ENCODE measurements at regions of chr17 and their contacts with region 1.

Region 1: DNA sequence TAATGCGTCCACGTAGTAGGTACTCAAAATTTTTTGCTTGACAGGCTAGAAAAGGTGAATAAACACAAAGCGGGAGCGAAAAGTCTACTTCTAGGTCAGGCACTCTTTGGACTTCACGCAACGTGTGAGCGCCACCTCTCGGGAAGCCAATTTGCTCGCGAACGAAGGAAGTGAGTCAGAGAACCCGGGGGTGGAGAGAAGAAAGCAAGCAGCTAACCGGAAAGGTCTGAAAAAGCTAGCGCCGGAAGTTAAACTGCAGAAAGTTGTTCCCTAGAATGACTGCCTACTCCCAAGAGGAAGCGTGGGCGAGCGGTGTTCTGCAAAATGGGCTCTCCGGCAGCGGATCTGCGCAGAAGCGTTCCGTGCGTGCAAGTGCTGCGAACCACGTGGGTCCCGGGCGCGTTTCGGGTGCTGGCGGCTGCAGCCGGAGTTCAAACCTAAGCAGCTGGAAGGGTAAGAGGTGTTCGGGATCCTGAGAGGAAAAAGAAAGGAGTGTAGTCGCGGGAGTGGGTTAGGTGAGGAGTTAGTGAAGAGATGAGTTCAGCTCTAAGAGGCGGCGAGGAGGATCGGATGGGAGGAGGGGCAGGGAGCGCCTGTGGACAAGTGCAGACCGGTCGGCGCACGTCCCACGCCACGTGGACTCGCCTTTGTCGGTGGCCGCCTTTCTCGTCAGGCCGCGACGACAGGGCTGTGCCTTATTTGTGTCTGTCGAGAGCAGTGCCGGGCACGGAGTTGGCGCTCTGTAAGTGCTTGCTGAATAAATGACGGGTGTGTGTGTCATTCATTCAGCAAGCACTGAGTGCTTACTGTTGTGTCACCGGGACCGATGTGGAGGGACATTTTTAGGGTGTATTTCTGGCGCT is at the start of gene NME1:
- DNase-seq: peak; percentile 94 to 99 (median 98)
- ATAC-seq: peak; percentile 97
- H3K4me3 ChIP-seq: peak within 1 kb of the TSS; percentile 78
- H3K4me3 Mint-ChIP-seq: no peak within 1 kb of the TSS
- H3K27ac ChIP-seq: peak within 1 kb of the TSS; percentile 75
- H3K27ac Mint-ChIP-seq: no peak within 1 kb of the TSS
- H3K4me1 ChIP-seq: peaks cover 15% of the 10 kb centered on the region in 2 donors
- H3K4me1 Mint-ChIP-seq: peaks cover 0 to 15% (median 6%) of the 10 kb centered on the region in 7 donors
- H3K27me3 ChIP-seq: no peaks in the 10 kb centered on the region
- H3K27me3 Mint-ChIP-seq: no peaks in the 10 kb centered on the region
- total RNA-seq, gene NME1: 13.4 to 159 (median 20.1) TPM

Region 2: DNA sequence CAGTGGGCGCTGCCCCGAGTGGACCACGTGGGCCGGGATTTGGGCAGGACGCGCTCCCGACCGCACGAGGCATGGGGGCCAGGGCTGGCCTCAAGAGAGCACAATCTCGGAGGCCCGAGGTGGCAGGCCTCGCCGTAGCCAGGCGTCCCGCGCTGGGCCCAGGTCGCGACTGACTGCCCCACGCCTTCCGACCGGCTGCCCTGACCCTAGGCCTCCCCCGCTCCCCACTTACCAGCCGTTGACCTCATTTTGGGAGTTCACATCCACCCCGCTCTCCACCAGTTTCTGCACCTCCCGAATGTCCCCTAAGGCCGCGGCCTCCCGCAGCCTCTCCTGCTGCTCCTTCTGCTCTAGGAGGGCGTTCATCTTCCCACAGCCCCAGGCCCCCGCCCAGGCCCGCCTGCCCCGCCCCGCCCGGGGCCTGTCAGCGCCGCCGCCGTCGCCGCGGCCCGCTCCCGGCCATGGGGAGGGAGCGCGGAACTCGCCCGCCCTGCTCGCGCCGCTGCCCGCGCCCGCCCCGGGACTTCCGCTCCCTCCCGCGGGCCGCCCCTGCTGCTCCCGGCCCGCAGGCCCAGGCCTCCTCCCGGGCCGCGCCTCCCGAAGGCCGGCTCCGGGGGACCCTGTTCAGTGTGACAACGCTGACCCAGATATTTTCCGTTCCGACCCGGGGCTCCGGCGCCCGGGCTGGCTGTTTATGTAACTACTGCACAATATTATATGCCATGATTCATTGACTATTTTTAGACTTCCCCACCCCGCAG is 446.0 kb before region 1 on chr17 and contains the start of gene ANKRD40:
- CTCF ChIA-PET with region 1: no interaction called
- POLR2A ChIA-PET with region 1: no interaction called
- intact Hi-C with region 1: loop called (anchors 2 to 10 kb)
- DNase-seq: peak; percentile 87 to 95 (median 91)
- ATAC-seq: peak; percentile 94
- H3K4me3 ChIP-seq: peak within 1 kb of the TSS; percentile 79
- H3K4me3 Mint-ChIP-seq: peak within 1 kb of the TSS; percentile 88 to 97 (median 93)
- H3K27ac ChIP-seq: peak within 1 kb of the TSS; percentile 88
- H3K27ac Mint-ChIP-seq: peak within 1 kb of the TSS; percentile 93 to 99 (median 97)
- H3K4me1 ChIP-seq: peaks cover 13 to 20% of the 10 kb centered on the region in 2 donors
- H3K4me1 Mint-ChIP-seq: peaks cover 23 to 68% (median 47%) of the 10 kb centered on the region in 7 donors
- H3K27me3 ChIP-seq: no peaks in the 10 kb centered on the region
- H3K27me3 Mint-ChIP-seq: peaks cover 0 to 2% (median 0%) of the 10 kb centered on the region in 5 donors
- total RNA-seq, gene ANKRD40: 27.4 to 37.2 (median 33.4) TPM

Region 3: DNA sequence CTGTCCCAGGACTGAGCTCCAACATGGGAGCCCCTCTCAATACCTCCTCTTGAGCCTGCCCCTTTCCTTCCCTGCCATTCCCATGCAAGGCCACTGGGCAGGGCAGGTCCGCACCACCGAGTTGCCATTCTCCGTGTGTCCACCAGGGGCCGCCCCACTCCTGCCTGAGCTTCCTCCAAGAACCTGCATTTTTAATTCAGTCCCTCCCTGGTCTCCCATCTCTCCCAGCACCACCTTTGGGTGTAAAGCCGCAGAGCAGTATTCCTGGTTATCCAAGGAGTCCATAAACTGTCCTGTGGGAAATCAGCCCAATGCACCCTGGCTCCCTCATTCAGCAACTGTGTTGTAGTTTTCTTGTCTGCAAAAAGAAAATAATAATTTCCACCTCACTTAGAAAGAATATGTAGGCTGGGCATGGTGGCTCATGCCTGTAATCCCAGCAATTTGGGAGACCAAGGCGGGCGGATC is 370.2 kb before region 1 on chr17:
- CTCF ChIA-PET with region 1: no interaction called
- POLR2A ChIA-PET with region 1: no interaction called
- intact Hi-C with region 1: loop called in 1 of 2 experiments (anchors 1 kb)
- DNase-seq: peak; percentile 53 to 82 (median 68)
- ATAC-seq: peak; percentile 86
- H3K4me3 ChIP-seq: no peak overlapping the region
- H3K4me3 Mint-ChIP-seq: peak overlapping the region in 7 of 10 donors; percentile 6 to 78 (median 46)
- H3K27ac ChIP-seq: no peak overlapping the region
- H3K27ac Mint-ChIP-seq: peak overlapping the region in 4 of 9 donors; percentile 21 to 58 (median 43)
- H3K4me1 ChIP-seq: peaks cover 0 to 14% of the 10 kb centered on the region in 2 donors
- H3K4me1 Mint-ChIP-seq: peaks cover 18 to 37% (median 27%) of the 10 kb centered on the region in 7 donors
- H3K27me3 ChIP-seq: no peaks in the 10 kb centered on the region
- H3K27me3 Mint-ChIP-seq: peaks cover 0 to 44% (median 0%) of the 10 kb centered on the region in 5 donors

Region 4: GRCh38 chr17:50853015-50853615 is 300.3 kb before region 1 on chr17:
- CTCF ChIA-PET with region 1: interaction called, 3 read pairs
- POLR2A ChIA-PET with region 1: no interaction called
- intact Hi-C with region 1: loop called (anchors 1 to 5 kb)
- DNase-seq: no peak
- ATAC-seq: no peak
- H3K4me3 ChIP-seq: no peak overlapping the region
- H3K4me3 Mint-ChIP-seq: peak overlapping the region in 8 of 10 donors; percentile 75 to 89 (median 85)
- H3K27ac ChIP-seq: no peak overlapping the region
- H3K27ac Mint-ChIP-seq: peak overlapping the region in 7 of 9 donors; percentile 41 to 93 (median 88)
- H3K4me1 ChIP-seq: peaks cover 5 to 7% of the 10 kb centered on the region in 2 donors
- H3K4me1 Mint-ChIP-seq: peaks cover 18 to 40% (median 28%) of the 10 kb centered on the region in 7 donors
- H3K27me3 ChIP-seq: no peaks in the 10 kb centered on the region
- H3K27me3 Mint-ChIP-seq: peaks cover 0 to 32% (median 0%) of the 10 kb centered on the region in 5 donors

Region 5: DNA sequence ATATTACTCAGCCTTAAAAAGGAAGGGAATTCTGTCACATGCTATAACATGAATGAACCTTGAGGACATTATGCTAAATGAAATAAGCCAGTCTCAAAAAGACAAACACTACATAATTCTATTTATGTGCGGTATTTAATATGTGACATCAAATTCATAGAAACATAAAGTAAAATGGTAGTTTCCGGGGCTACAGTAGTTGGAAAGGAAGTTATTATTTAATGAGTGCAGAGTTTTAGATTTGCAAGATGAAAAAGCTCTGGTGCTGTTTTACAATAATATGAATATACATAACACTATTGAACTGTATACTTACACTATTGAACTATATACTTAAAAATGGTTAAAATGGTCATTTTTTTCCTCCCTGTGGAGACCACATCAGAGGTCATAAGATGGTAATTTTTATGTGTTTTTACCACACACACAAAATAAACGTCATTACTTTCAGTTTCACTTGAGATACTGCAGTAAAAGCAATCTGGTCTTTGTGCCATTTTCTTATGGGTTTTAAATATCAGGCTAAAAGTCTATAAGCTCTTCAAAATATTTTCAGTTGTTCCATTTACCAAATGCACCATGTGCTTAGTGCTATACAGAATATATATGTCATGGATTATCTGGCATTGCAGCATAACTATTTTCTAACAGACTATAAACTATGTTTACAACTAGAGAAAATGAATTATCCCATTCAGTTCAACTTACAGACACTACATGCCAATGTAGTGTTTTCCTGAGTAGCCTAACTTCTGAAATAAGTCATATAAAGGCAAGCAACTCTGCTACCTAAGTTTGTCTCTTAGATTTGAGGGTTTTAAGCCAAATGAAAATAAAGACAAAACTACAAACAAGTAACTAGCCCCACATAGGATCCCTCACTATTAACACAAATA is 123.6 kb before region 1 on chr17:
- CTCF ChIA-PET with region 1: no interaction called
- POLR2A ChIA-PET with region 1: interaction called, 4 read pairs
- intact Hi-C with region 1: loop called in 1 of 2 experiments (anchors 1 kb)
- DNase-seq: peak in 7 of 9 donors; percentile 17 to 62 (median 54)
- ATAC-seq: peak; percentile 76
- H3K4me3 ChIP-seq: peak overlapping the region; percentile 2
- H3K4me3 Mint-ChIP-seq: peak overlapping the region; percentile 48 to 88 (median 78)
- H3K27ac ChIP-seq: peak overlapping the region; percentile 62
- H3K27ac Mint-ChIP-seq: peak overlapping the region; percentile 89 to 97 (median 93)
- H3K4me1 ChIP-seq: peaks cover 13 to 15% of the 10 kb centered on the region in 2 donors
- H3K4me1 Mint-ChIP-seq: peaks cover 7 to 38% (median 29%) of the 10 kb centered on the region in 7 donors
- H3K27me3 ChIP-seq: no peaks in the 10 kb centered on the region
- H3K27me3 Mint-ChIP-seq: no peaks in the 10 kb centered on the region

Region 6: DNA sequence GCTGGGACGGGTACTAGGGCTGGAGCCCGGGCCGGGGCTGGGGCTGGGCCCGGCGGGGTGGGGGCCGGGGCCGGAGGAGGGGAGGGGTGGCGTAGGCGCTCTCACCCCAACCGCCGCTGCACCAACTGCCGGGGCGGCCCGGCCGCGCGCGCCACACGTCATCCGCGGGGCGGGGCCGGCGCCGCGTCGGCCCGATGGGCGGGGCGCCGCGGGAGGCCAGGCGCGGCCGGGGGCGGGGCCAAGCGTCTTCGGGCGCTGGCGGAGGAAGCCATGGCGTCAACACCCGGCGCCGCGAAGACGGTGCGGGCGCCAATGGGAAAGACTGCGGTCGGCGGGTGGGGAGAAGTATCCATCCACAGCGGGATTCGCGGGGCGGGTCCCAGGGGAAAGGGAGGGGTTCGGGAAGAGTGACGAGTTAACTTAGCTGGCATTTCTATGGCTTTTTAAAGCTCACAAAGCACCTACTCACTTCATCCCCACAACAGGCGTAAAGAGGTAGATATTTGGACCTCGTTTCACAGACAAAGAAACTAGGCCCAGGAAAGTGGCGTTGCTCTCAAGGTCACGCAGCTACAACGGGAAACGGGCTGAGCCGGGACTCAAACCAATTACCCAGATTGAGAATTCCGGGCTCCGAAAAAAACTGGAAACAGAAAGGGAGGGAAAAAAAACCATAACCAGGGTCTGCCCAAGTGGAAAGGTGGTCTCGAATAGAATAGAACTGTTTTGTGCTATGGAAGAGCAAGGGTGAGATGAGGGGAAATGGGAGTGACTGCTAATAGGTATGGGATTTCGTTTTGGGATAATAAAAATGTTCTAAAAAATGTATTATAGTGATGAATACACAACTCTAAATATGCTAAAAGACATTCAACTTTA is 32.5 kb before region 1 on chr17 and contains the start of gene SPAG9:
- CTCF ChIA-PET with region 1: interaction called, 4 read pairs
- POLR2A ChIA-PET with region 1: interaction called, 20 read pairs
- intact Hi-C with region 1: loop called (anchors 1 kb)
- DNase-seq: peak; percentile 87 to 97 (median 92)
- ATAC-seq: peak; percentile 92
- H3K4me3 ChIP-seq: peak within 1 kb of the TSS; percentile 97
- H3K4me3 Mint-ChIP-seq: peak within 1 kb of the TSS; percentile 87 to 99 (median 97)
- H3K27ac ChIP-seq: peak within 1 kb of the TSS; percentile 96
- H3K27ac Mint-ChIP-seq: peak within 1 kb of the TSS; percentile 95 to 100 (median 99)
- H3K4me1 ChIP-seq: peaks cover 28 to 35% of the 10 kb centered on the region in 2 donors
- H3K4me1 Mint-ChIP-seq: peaks cover 27 to 53% (median 49%) of the 10 kb centered on the region in 7 donors
- H3K27me3 ChIP-seq: no peaks in the 10 kb centered on the region
- H3K27me3 Mint-ChIP-seq: no peaks in the 10 kb centered on the region
- total RNA-seq, gene SPAG9: 52.6 to 73.4 (median 54.9) TPM

Region 7: GRCh38 chr17:51189628-51190027 is 36.2 kb after region 1 on chr17:
- CTCF ChIA-PET with region 1: no interaction called
- POLR2A ChIA-PET with region 1: no interaction called
- intact Hi-C with region 1: no loop called
- DNase-seq: no peak
- ATAC-seq: no peak
- H3K4me3 ChIP-seq: no peak overlapping the region
- H3K4me3 Mint-ChIP-seq: no peak overlapping the region
- H3K27ac ChIP-seq: no peak overlapping the region
- H3K27ac Mint-ChIP-seq: peak overlapping the region in 5 of 9 donors; percentile 6 to 59 (median 34)
- H3K4me1 ChIP-seq: no peaks in the 10 kb centered on the region
- H3K4me1 Mint-ChIP-seq: peaks cover 0 to 6% (median 0%) of the 10 kb centered on the region in 7 donors
- H3K27me3 ChIP-seq: no peaks in the 10 kb centered on the region
- H3K27me3 Mint-ChIP-seq: no peaks in the 10 kb centered on the region

Region 8: GRCh38 chr17:51260125-51260880 is 106.9 kb after region 1 on chr17 and contains the start of gene UTP18:
- CTCF ChIA-PET with region 1: no interaction called
- POLR2A ChIA-PET with region 1: interaction called, 3 read pairs
- intact Hi-C with region 1: loop called (anchors 1 kb)
- DNase-seq: peak; percentile 91 to 98 (median 97)
- ATAC-seq: peak; percentile 92
- H3K4me3 ChIP-seq: peak within 1 kb of the TSS; percentile 89
- H3K4me3 Mint-ChIP-seq: peak within 1 kb of the TSS; percentile 88 to 98 (median 96)
- H3K27ac ChIP-seq: peak within 1 kb of the TSS; percentile 89
- H3K27ac Mint-ChIP-seq: peak within 1 kb of the TSS; percentile 96 to 99 (median 98)
- H3K4me1 ChIP-seq: peaks cover 35 to 36% of the 10 kb centered on the region in 2 donors
- H3K4me1 Mint-ChIP-seq: peaks cover 45 to 80% (median 61%) of the 10 kb centered on the region in 7 donors
- H3K27me3 ChIP-seq: no peaks in the 10 kb centered on the region
- H3K27me3 Mint-ChIP-seq: no peaks in the 10 kb centered on the region
- total RNA-seq, gene UTP18: 31.1 to 46.2 (median 45.5) TPM